B cell (primary cell): ENCODE measurements at regions of chr2 and their contacts with region 1.

Region 1: GRCh38 chr2:207625018-207625907 is at the start of gene METTL21A:
- DNase-seq: peak; percentile 99
- ATAC-seq: peak; percentile 78
- H3K4me3 ChIP-seq: peak within 1 kb of the TSS; percentile 83 to 100 (median 95)
- H3K4me3 Mint-ChIP-seq: peak within 1 kb of the TSS; percentile 97
- H3K27ac ChIP-seq: peak within 1 kb of the TSS; percentile 98 to 99
- H3K27ac Mint-ChIP-seq: peak within 1 kb of the TSS; percentile 97
- H3K4me1 ChIP-seq: peaks cover 40 to 56% of the 10 kb centered on the region in 2 donors
- H3K4me1 Mint-ChIP-seq: peaks cover 45% of the 10 kb centered on the region
- H3K27me3 ChIP-seq: no peaks in the 10 kb centered on the region
- H3K27me3 Mint-ChIP-seq: no peaks in the 10 kb centered on the region
- CTCF ChIP-seq: peak; percentile 60
- total RNA-seq, gene METTL21A: 33.1 and 34.4 TPM in 2 replicates

Region 2: DNA sequence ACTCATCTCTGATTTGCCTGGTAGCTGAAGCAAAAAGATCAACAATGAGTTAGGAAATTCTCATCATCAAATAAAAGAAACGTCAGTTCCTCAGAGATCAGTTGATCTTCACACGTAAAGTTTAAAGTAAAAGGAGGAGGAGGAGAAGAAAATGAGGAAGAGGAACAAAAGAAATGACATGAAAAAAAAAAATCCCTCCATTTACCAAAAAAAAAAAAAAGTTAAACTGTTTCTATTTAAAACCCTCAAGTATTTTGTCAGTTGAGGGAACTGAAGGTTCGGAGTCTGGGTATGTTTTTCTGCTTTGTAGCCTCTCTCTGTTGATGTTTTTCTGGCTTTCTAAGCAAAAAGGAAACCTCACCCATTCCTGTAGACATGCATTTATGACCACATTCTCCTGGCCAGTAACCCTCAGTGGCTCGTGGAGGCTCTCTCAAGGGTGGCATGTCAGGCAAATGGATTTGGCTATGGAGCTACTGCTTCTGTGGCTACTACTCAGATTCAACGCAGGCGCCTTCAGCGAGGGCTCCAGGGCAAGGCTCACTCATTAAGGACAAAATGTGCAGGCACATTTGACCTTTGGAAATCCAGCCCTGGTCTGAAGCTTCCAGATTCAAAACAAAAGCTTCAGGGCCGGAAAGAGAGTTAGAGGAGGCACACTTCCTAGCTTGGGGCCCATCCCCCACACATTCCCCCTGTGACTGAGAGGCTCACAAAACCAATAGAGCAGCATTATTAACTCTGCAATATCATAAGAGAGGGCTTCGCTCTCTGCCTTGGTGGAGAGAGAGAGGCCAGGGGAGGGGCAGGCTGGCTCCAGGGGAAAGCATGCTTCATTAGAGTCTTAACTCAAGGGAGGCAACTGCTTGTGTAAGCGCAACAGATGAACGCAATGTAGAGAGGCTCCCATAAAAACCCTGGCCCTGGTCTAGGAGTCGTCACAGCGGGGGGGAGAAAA is 481.8 kb before region 1 on chr2:
- CTCF ChIA-PET with region 1: no interaction called
- POLR2A ChIA-PET with region 1: no interaction called
- intact Hi-C with region 1: loop called (anchors 2 kb)
- DNase-seq: peak; percentile 86
- ATAC-seq: peak; percentile 77
- H3K4me3 ChIP-seq: peak overlapping the region; percentile 43 to 71 (median 56)
- H3K4me3 Mint-ChIP-seq: peak overlapping the region; percentile 89
- H3K27ac ChIP-seq: peak overlapping the region; percentile 93 to 99
- H3K27ac Mint-ChIP-seq: peak overlapping the region; percentile 94
- H3K4me1 ChIP-seq: peaks cover 57 to 62% of the 10 kb centered on the region in 2 donors
- H3K4me1 Mint-ChIP-seq: peaks cover 68% of the 10 kb centered on the region
- H3K27me3 ChIP-seq: no peaks in the 10 kb centered on the region
- H3K27me3 Mint-ChIP-seq: no peaks in the 10 kb centered on the region
- CTCF ChIP-seq: no peak

Region 3: GRCh38 chr2:207571370-207571769 is 53.9 kb before region 1 on chr2:
- CTCF ChIA-PET with region 1: no interaction called
- POLR2A ChIA-PET with region 1: no interaction called
- intact Hi-C with region 1: no loop called
- DNase-seq: no peak
- ATAC-seq: no peak
- H3K4me3 ChIP-seq: no peak overlapping the region
- H3K4me3 Mint-ChIP-seq: no peak overlapping the region
- H3K27ac ChIP-seq: no peak overlapping the region
- H3K27ac Mint-ChIP-seq: peak overlapping the region; percentile 46
- H3K4me1 ChIP-seq: no peaks in the 10 kb centered on the region
- H3K4me1 Mint-ChIP-seq: peaks cover 8% of the 10 kb centered on the region
- H3K27me3 ChIP-seq: no peaks in the 10 kb centered on the region
- H3K27me3 Mint-ChIP-seq: no peaks in the 10 kb centered on the region
- CTCF ChIP-seq: no peak

Region 4: DNA sequence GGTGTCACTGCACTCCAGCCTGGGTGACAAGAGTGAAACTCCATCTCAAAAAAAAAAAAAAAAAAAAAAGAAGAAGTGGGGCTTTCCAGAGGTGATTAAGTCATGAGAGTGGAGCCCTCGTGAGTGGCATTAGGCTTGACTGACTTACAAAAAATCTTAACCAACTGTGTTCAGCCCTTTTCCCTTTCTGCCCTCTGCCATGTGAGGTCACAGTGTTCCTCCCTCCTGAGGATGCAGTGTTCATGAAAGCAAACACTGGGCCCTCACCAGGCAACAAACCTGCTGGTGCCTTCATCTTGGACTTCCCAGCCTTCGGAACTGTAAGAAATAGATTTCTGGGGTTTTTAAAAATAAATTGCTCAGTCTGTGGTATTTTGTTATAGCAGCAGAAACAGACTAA is 36.9 kb after region 1 on chr2:
- CTCF ChIA-PET with region 1: interaction called, 22 read pairs
- POLR2A ChIA-PET with region 1: interaction called, 4 read pairs
- intact Hi-C with region 1: loop called (anchors 1 kb)
- DNase-seq: peak; percentile 94
- ATAC-seq: peak; percentile 96
- H3K4me3 ChIP-seq: peak overlapping the region in 4 of 5 experiments; percentile 1 to 67 (median 44)
- H3K4me3 Mint-ChIP-seq: peak overlapping the region; percentile 87
- H3K27ac ChIP-seq: peak overlapping the region; percentile 79 to 98
- H3K27ac Mint-ChIP-seq: peak overlapping the region; percentile 97
- H3K4me1 ChIP-seq: peaks cover 44 to 58% of the 10 kb centered on the region in 2 donors
- H3K4me1 Mint-ChIP-seq: peaks cover 65% of the 10 kb centered on the region
- H3K27me3 ChIP-seq: no peaks in the 10 kb centered on the region
- H3K27me3 Mint-ChIP-seq: no peaks in the 10 kb centered on the region
- CTCF ChIP-seq: no peak

Region 5: GRCh38 chr2:207734264-207734635 is 109.0 kb after region 1 on chr2:
- CTCF ChIA-PET with region 1: interaction called, 18 read pairs
- POLR2A ChIA-PET with region 1: no interaction called
- intact Hi-C with region 1: loop called (anchors 5 kb)
- DNase-seq: peak; percentile 55
- ATAC-seq: no peak
- H3K4me3 ChIP-seq: no peak overlapping the region
- H3K4me3 Mint-ChIP-seq: no peak overlapping the region
- H3K27ac ChIP-seq: no peak overlapping the region
- H3K27ac Mint-ChIP-seq: no peak overlapping the region
- H3K4me1 ChIP-seq: no peaks in the 10 kb centered on the region
- H3K4me1 Mint-ChIP-seq: peaks cover 13% of the 10 kb centered on the region
- H3K27me3 ChIP-seq: no peaks in the 10 kb centered on the region
- H3K27me3 Mint-ChIP-seq: no peaks in the 10 kb centered on the region
- CTCF ChIP-seq: peak; percentile 28

Region 6: GRCh38 chr2:208025037-208025813 is 400.0 kb after region 1 on chr2 and contains the start of gene PLEKHM3:
- CTCF ChIA-PET with region 1: interaction called, 8 read pairs
- POLR2A ChIA-PET with region 1: interaction called, 5 read pairs
- intact Hi-C with region 1: loop called (anchors 1 kb)
- DNase-seq: peak; percentile 83
- ATAC-seq: peak; percentile 92
- H3K4me3 ChIP-seq: peak within 1 kb of the TSS; percentile 71 to 95 (median 92)
- H3K4me3 Mint-ChIP-seq: peak within 1 kb of the TSS; percentile 95
- H3K27ac ChIP-seq: peak within 1 kb of the TSS; percentile 57 to 84
- H3K27ac Mint-ChIP-seq: peak within 1 kb of the TSS; percentile 96
- H3K4me1 ChIP-seq: peaks cover 7 to 8% of the 10 kb centered on the region in 2 donors
- H3K4me1 Mint-ChIP-seq: peaks cover 25% of the 10 kb centered on the region
- H3K27me3 ChIP-seq: no peaks in the 10 kb centered on the region
- H3K27me3 Mint-ChIP-seq: no peaks in the 10 kb centered on the region
- CTCF ChIP-seq: no peak
- total RNA-seq, gene PLEKHM3: 17.7 and 19.5 TPM in 2 replicates

Region 7: GRCh38 chr2:208265801-208266552 is 640.7 kb after region 1 on chr2 and contains the start of gene PIKFYVE:
- CTCF ChIA-PET with region 1: no interaction called
- POLR2A ChIA-PET with region 1: interaction called, 10 read pairs
- intact Hi-C with region 1: loop called (anchors 1 kb)
- DNase-seq: peak; percentile 96
- ATAC-seq: peak; percentile 87
- H3K4me3 ChIP-seq: peak within 1 kb of the TSS; percentile 61 to 98 (median 76)
- H3K4me3 Mint-ChIP-seq: peak within 1 kb of the TSS; percentile 95
- H3K27ac ChIP-seq: peak within 1 kb of the TSS; percentile 85 to 89
- H3K27ac Mint-ChIP-seq: peak within 1 kb of the TSS; percentile 99
- H3K4me1 ChIP-seq: peaks cover 34 to 42% of the 10 kb centered on the region in 2 donors
- H3K4me1 Mint-ChIP-seq: peaks cover 44% of the 10 kb centered on the region
- H3K27me3 ChIP-seq: no peaks in the 10 kb centered on the region
- H3K27me3 Mint-ChIP-seq: no peaks in the 10 kb centered on the region
- CTCF ChIP-seq: no peak
- total RNA-seq, gene PIKFYVE: 79.3 and 80.9 TPM in 2 replicates